ENCODE measurements at regions of chr17 and their contacts with region 1.

Region 1: DNA sequence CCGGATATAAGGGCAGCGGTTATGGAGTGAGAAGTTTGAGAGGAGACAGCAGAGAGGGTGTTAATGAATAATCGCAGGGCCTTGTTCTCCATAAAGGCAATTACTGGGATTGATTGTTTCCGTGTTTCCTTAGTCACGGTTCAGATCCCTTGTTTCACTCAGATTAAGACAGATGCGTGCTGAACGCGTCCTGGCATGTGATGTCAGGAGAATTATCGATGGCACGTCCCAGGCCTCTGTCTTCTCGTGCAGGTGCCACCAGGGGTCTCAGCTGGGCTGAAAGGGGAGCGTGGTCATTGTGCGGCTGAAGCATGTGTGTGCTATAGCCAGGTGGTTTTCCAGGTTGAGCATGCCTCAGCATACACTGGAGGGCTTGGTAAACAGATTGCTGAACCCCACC is 142.4 kb upstream of the NOL11 start:
- DNase-seq: peak; percentile 68
- ATAC-seq: peak; percentile 49
- H3K4me3 ChIP-seq: peak overlapping the region; percentile 68; the same call in 1 of the 2 replicates
- H3K27ac ChIP-seq: peak overlapping the region; percentile 88
- H3K4me1 ChIP-seq: peaks cover 83% of the 10 kb centered on the region
- H3K27me3 ChIP-seq: no peaks in the 10 kb centered on the region
- CTCF ChIP-seq: peak; percentile 53 to 60 (median 59)
- EP300 ChIP-seq: 0 out of 4 replicates have a peak, but pooled peaks of 1 of the 2 experiments have one; percentile 28
- POLR2A ChIP-seq: peak; percentile 60
- RAD21 ChIP-seq: peak; percentile 73

Region 2: DNA sequence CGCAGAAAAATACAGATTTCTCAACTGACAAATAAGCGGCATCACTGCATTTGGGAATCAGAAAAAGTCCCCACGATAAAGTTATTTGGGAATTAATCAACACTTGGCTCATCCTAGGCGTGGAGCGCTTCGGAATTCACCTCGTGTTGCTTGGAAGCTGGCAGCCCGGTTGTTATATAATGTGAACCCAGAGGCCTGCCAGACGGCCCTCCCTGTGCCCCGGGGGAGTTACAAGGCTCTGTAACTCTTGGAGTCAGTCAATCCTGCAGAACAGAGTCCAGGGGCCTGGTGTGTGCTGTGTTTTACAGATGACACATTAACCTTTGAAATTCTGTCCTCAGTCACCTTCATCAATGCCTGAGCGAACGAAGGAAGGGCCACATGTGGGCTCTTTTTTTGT is 87.2 kb before region 1 on chr17:
- CTCF ChIA-PET with region 1: no interaction called
- POLR2A ChIA-PET with region 1: no interaction called
- RAD21 ChIA-PET with region 1: no interaction called
- SMC1A ChIA-PET with region 1: interaction called, 5 read pairs
- in situ Hi-C with region 1: no loop called
- intact Hi-C with region 1: loop called (anchors 1 kb)
- DNase-seq: no peak
- ATAC-seq: no peak
- H3K4me3 ChIP-seq: no peak overlapping the region
- H3K27ac ChIP-seq: no peak overlapping the region
- H3K4me1 ChIP-seq: peaks cover 10% of the 10 kb centered on the region
- H3K27me3 ChIP-seq: no peaks in the 10 kb centered on the region
- CTCF ChIP-seq: no peak
- EP300 ChIP-seq: no peak
- POLR2A ChIP-seq: no peak
- RAD21 ChIP-seq: no peak

Region 3: DNA sequence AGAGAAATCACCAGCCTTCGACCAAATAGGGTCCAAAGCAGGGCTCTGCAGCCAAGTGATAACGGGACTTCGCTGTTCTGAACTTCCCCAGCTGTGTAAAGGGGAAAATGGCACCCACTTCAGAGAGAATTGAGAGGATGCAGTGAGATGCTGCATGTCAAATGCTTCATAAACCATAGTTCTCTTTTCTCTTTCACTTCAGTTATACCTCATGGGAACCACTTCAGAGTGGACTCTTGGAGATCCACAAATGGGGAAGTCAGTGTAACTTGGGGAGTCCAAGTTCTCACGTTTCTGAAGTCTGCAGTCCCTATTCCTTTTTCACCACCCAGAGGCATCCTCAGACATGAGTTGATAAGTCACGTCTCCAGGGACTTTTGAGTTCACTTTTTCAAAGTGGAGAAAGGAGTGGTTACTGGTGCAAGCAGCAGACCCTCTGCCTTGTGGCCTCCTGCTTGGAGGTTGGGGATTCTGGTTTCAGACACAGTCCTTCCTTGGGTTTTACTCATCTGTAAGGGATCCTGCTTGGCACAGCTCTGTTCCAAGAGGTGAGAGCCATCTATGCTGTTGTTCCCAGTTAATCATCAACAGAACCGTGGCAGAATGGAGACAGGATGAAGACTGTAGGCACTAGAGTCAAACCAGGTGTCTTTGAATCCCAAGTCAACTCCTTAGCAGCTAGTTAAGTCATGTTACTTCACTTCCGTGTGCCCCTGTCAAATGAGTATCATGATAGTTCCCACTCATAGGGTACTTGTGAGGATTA is 19.0 kb after region 1 on chr17:
- CTCF ChIA-PET with region 1: interaction called, 47 read pairs
- POLR2A ChIA-PET with region 1: interaction called, 39 read pairs
- RAD21 ChIA-PET with region 1: interaction called, 80 read pairs
- SMC1A ChIA-PET with region 1: interaction called, 62 read pairs
- in situ Hi-C with region 1: no loop called
- intact Hi-C with region 1: loop called (anchors 1 kb)
- DNase-seq: peak; percentile 82
- ATAC-seq: peak; percentile 88
- H3K4me3 ChIP-seq: no peak overlapping the region
- H3K27ac ChIP-seq: peak overlapping the region; percentile 82
- H3K4me1 ChIP-seq: peaks cover 20% of the 10 kb centered on the region
- H3K27me3 ChIP-seq: no peaks in the 10 kb centered on the region
- CTCF ChIP-seq: no peak
- EP300 ChIP-seq: peak; percentile 5 to 6; a peak in 1 of 4 replicates
- POLR2A ChIP-seq: no peak
- RAD21 ChIP-seq: peak; percentile 39; the same call in 1 of the 2 replicates

Region 4: GRCh38 chr17:67629971-67630320 is 54.6 kb after region 1 on chr17:
- CTCF ChIA-PET with region 1: interaction called, 6 read pairs
- POLR2A ChIA-PET with region 1: interaction called, 3 read pairs
- RAD21 ChIA-PET with region 1: interaction called, 4 read pairs
- SMC1A ChIA-PET with region 1: interaction called, 3 read pairs
- in situ Hi-C with region 1: no loop called
- intact Hi-C with region 1: loop called (anchors 1 kb)
- DNase-seq: no peak
- ATAC-seq: peak; percentile 72
- H3K4me3 ChIP-seq: no peak overlapping the region
- H3K27ac ChIP-seq: no peak overlapping the region; the same call in 1 of the 2 replicates
- H3K4me1 ChIP-seq: peaks cover 15% of the 10 kb centered on the region
- H3K27me3 ChIP-seq: no peaks in the 10 kb centered on the region
- CTCF ChIP-seq: peak; percentile 47 to 53 (median 52); a peak in 4 of 6 replicates
- EP300 ChIP-seq: no peak
- POLR2A ChIP-seq: no peak
- RAD21 ChIP-seq: peak; percentile 68

Region 5: DNA sequence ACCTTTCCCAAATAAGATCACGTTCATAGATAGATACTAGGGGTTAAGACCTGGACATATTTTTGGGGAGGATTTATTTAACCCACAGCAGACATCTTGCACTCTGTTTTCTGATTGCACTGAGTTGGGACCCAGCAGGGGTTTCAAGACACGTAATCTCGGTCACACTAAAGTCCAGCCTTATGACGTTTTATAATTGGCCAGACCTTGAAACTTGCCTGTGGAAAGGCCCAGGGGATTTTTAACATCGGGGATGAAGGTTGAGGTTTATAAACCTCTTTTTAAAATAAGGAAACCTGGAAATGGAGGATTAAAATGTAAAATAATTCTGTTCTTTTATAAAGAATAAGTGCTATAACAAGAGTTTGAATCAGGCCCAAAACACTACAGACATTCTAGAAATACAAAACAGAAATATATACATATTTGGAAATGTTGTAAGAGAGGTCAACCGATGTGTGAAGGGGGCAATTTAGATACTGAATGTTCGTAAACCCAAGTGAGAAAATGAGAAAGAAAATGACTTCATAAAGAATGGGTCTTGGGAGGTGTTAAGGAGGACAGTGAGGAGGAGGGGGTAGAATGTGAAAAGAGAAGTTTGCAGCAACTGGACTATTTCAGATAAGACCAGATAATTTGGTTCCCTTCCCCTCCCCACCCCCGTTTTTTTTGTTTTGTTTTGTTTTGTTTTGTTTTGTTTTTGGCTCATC is 81.3 kb after region 1 on chr17:
- CTCF ChIA-PET with region 1: interaction called, 36 read pairs
- POLR2A ChIA-PET with region 1: interaction called, 53 read pairs
- RAD21 ChIA-PET with region 1: interaction called, 29 read pairs
- SMC1A ChIA-PET with region 1: interaction called, 156 read pairs
- in situ Hi-C with region 1: no loop called
- intact Hi-C with region 1: no loop called
- DNase-seq: peak; percentile 51
- ATAC-seq: peak; percentile 86
- H3K4me3 ChIP-seq: no peak overlapping the region
- H3K27ac ChIP-seq: peak overlapping the region; percentile 88
- H3K4me1 ChIP-seq: peaks cover 42% of the 10 kb centered on the region
- H3K27me3 ChIP-seq: no peaks in the 10 kb centered on the region
- CTCF ChIP-seq: no peak
- EP300 ChIP-seq: peak; percentile 42 to 66; a peak in 2 of 4 replicates
- POLR2A ChIP-seq: no peak
- RAD21 ChIP-seq: peak; percentile 5; the same call in 1 of the 2 replicates

Region 6: DNA sequence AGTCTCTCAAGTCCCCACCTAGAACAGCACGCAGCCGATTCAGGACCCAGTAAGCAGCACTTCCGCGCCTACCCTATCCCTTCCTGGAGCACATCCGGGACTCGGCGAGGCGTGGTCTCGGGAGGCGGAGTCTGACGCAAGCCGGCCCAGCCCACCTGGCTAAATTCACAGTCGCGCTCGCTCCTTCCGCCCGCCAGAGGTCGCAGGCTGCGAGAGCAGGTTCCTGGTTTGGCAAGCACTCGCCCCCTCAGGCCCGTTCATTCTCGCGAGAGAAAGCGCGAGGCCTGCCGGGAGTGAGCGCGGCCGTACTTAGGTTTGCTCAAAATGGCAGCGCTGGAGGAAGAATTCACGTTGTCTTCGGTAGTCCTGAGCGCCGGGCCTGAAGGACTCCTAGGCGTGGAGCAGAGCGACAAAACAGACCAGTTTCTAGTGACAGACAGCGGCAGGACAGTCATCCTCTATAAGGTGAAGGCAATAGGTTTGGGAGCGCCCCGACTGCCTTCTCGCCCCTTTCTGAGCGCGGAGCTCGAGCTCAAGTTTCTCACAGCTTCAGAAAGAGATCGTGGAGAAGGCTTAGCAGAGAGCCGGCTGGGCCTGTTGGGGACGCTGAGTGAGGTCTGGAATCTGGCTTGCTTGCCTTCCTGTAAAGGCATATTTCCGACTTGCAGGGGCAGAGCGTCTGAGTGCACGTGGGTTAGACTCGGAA is 142.5 kb after region 1 on chr17 and contains the start of gene NOL11:
- CTCF ChIA-PET with region 1: interaction called, 3 read pairs
- POLR2A ChIA-PET with region 1: no interaction called
- RAD21 ChIA-PET with region 1: interaction called, 5 read pairs
- SMC1A ChIA-PET with region 1: interaction called, 6 read pairs
- in situ Hi-C with region 1: no loop called
- intact Hi-C with region 1: loop called (anchors 1 kb)
- DNase-seq: peak; percentile 97
- ATAC-seq: peak; percentile 95
- H3K4me3 ChIP-seq: peak within 1 kb of the TSS; percentile 95
- H3K27ac ChIP-seq: peak within 1 kb of the TSS; percentile 91
- H3K4me1 ChIP-seq: peaks cover 6% of the 10 kb centered on the region
- H3K27me3 ChIP-seq: no peaks in the 10 kb centered on the region
- CTCF ChIP-seq: peak; percentile 94 to 99 (median 96); a peak in 5 of 6 replicates
- EP300 ChIP-seq: no peak
- POLR2A ChIP-seq: peak; percentile 91
- RAD21 ChIP-seq: peak; percentile 56
- polyA plus RNA-seq, gene NOL11: 92.6 to 130 TPM